ENCODE measurements at regions of chr1 and their contacts with region 1.

Region 1: DNA sequence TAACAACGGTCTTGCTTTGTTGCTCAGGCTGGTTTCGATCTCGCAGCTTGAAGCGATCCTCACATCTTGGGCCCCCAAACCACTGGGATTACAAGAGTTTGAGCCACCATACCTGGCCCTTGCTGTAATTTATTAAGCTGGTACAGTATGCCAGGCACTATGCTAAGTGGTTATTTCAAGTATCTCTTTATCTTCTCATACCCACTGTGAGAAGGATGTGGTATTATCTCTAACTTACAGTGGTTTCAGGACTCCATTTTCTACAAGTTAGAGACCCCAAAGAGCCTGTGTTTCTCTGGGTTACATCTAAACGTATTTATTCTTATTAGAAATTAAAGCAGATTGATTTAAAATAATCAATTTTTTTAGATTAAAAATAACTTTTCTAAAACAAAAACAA is 8.1 kb upstream of the ST3GAL3 start:
- DNase-seq: no peak
- CTCF ChIP-seq: no peak

Region 2: GRCh38 chr1:43634721-43635120 is 64.6 kb before region 1 on chr1:
- CTCF ChIA-PET with region 1: no interaction called
- POLR2A ChIA-PET with region 1: no interaction called
- DNase-seq: no peak
- CTCF ChIP-seq: no peak

Region 3: DNA sequence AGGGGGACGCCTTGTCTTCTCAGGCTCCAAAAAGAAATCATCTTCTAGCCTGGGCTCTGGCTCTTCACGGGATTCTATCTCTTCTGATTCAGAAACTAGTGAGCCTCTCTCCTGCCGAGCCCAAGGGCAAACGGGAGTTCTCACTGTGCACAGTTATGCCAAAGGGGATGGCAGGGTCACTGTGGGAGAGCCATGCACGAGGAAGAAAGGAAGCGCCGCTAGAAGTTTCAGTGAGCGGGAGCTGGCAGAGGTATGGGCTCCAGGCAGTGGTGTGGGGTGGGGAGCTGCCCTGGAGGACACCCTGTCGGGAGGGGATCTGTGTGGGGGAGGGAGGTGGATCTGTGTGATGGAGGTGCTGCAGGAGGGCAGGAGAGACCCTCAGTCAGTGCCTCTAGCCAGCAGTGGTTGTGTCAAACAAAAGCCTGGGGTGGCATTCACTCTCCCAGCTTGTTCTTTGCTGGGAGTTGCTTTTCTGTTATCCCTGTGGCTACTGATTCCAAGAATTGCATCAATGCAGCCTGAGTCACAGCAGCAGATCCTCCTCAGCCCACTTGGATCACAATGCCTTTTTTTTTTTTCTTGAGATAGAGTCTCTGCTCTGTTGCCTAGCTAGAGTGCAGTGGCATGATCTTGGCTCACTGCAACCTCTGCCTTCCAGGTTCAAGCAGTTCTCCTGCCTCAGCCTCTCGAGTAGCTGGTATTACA is 27.5 kb before region 1 on chr1:
- CTCF ChIA-PET with region 1: no interaction called
- POLR2A ChIA-PET with region 1: no interaction called
- DNase-seq: no peak
- CTCF ChIP-seq: no peak

Region 4: DNA sequence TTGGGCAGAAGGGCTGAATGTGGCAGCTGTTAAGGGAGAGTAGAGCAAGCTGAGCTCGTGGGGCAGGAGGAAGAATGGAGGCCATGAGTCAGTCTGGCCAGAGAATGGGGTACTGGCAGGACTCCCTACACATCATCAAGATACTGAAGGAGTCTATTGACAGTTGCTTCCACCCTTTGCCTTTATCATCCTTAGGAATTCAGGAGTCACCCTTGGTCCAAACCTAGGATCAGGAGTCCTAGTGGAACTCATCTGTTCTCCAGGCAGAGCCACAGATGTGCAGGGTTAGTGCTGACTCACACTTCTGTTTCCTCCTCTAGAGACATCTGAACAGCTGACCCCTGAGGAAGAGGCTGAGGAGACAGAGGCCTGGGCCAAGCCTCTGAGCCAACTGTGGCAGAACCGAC is 10.7 kb before region 1 on chr1:
- CTCF ChIA-PET with region 1: interaction called, 15 read pairs
- POLR2A ChIA-PET with region 1: no interaction called
- DNase-seq: no peak
- CTCF ChIP-seq: no peak

Measured in GM10248 (cell line).